WTC11 (cell line): ENCODE measurements at regions of chr19 and their contacts with region 1.

Region 1: DNA sequence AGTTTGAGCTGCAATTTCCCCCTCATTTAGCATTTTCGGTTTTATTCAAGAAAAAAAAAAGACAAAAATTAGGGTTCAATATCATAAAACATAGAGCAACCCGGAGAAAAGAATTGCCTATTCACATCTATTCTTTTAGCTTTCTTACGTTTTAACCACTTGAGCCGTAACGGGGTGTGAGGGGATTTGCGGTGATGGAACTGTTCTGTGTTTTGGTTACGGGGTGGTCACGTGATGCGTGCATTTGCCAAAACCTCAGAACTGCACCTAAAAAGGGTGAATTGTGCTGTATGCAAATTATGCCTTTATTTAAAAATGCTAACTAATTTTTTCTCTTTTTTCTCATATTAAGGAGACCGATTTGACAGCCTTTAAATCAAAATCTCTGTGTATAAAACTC is 22.1 kb downstream of the CLEC11A start:
- DNase-seq: no peak
- ATAC-seq: no peak
- H3K4me3 Mint-ChIP-seq: no peak overlapping the region
- H3K27ac Mint-ChIP-seq: no peak overlapping the region
- H3K4me1 Mint-ChIP-seq: peaks cover 2% of the 10 kb centered on the region; the same call in 1 of the 2 replicates
- H3K27me3 Mint-ChIP-seq: peaks cover 8% of the 10 kb centered on the region
- CTCF ChIP-seq: no peak

Region 2: GRCh38 chr19:50777754-50778303 is 32.6 kb after region 1 on chr19:
- CTCF ChIA-PET with region 1: no interaction called
- POLR2A ChIA-PET with region 1: interaction called, 11 read pairs
- DNase-seq: peak; percentile 71
- ATAC-seq: peak; percentile 54
- H3K4me3 Mint-ChIP-seq: peak overlapping the region; percentile 59
- H3K27ac Mint-ChIP-seq: 0 out of 2 replicates have a peak overlapping the region, but pooled peaks have one; percentile 51
- H3K4me1 Mint-ChIP-seq: peaks cover 24% of the 10 kb centered on the region
- H3K27me3 Mint-ChIP-seq: peaks cover 95% of the 10 kb centered on the region
- CTCF ChIP-seq: no peak